K562 (cell line): ENCODE measurements at regions of chr16 and their contacts with region 1.

Region 1: DNA sequence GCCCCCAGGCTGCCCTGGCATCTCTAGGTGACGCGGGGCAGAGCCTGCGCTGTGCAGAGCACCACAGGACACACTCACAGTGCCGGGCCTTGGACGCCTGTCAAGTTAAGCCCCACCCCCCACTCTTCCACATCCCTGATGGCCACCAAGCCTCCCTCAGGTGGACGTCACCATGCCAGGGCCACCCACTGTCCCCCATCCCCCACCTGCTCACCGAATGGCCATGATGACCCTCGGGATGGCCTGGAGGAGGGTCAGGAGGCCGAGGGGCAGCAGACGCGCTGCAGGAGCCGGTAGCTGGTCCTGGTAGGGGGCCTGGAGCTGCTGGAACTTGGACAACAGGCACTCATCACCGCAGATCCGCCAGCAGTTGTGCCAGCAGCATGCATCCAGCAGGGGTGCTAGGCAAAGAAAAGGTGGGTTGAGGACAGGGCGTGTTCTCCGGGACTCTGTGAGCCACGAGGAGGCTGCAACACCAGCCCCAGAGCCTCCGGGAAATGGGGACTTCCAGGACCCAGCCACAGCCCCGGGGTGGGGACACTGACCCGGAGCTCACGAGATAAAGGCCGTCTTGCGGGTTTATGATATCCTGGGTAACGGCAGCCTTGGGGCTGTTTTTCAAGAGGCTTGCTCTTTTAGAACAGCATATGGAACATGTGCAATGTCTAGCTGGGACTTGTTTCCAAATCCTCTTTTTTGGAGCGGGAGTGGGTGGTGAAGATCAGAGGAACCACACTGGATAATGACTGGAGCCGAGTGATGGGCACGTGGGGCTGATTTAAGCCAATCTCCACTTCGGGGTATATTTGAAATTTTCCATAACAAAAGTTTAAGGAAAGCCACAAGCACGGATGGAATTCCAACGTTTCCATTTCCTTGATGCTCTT is 11.4 kb downstream of the C16orf95 start:
- DNase-seq: peak; percentile 85 to 87 (median 87)
- ATAC-seq: peak; percentile 91
- H3K4me3 ChIP-seq: peak overlapping the region; percentile 44
- H3K27ac ChIP-seq: peak overlapping the region; percentile 84
- H3K4me1 ChIP-seq: peaks cover 39 to 40% of the 10 kb centered on the region in 2 experiments
- H3K27me3 ChIP-seq: no peaks in the 10 kb centered on the region
- CTCF ChIP-seq: peak; percentile 64 to 67 (median 66)
- EP300 ChIP-seq: peak; percentile 51; the same call in 1 of the 2 replicates
- POLR2A ChIP-seq: peak; percentile 82
- RAD21 ChIP-seq: no peak

Region 2: GRCh38 chr16:87393680-87394055 is 87.9 kb after region 1 on chr16:
- CTCF ChIA-PET with region 1: no interaction called
- POLR2A ChIA-PET with region 1: interaction called, 16 read pairs
- in situ Hi-C with region 1: no loop called
- intact Hi-C with region 1: no loop called
- DNase-seq: no peak
- ATAC-seq: no peak
- H3K4me3 ChIP-seq: peak overlapping the region; percentile 89
- H3K27ac ChIP-seq: peak overlapping the region; percentile 84; the same call in 2 of the 3 replicates
- H3K4me1 ChIP-seq: peaks cover 22 to 23% of the 10 kb centered on the region in 2 experiments
- H3K27me3 ChIP-seq: no peaks in the 10 kb centered on the region
- CTCF ChIP-seq: no peak
- EP300 ChIP-seq: no peak
- POLR2A ChIP-seq: no peak
- RAD21 ChIP-seq: no peak